Pancreas (tissue), 10 donors: ENCODE measurements at regions of chr22 and their contacts with region 1.

Region 1: DNA sequence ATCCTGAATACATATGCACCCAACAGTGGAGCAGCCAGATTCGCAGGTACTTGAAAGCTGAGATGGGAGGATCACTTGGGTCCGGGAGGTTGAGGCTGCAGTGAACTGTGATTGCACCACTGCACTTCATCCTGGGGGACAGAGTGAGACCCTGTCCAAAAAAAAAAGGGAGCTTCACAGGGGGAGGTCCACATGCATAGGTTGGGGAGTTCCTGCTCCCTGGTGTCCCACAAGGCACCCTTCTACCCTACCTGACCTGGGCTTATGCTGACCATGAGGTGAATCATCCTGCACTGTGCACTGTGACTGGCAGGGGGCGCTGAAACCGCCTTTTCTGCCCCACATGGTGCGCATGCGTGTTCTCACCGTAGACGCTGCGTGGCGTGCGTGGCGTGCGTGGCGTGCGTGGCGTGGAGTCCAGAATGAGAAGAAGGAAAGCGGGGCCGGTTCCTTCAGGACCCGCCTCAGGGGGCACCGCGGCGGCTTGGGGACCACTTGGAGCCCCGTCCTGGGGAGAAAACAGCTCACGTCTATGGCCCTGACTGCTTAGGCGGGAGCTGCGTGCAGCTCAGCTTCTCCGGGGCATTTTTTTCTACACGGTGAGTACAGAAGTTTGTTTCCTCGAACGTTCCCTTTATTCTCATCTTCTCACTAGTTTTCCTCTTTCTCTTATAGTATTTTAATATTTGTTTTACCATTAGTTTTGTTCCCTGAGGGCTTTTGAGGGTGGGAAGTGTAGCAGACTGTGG is 116.6 kb upstream of the GRK3 start:
- DNase-seq: peak; percentile 80 to 95 (median 92)
- ATAC-seq: peak; percentile 95 to 99 (median 99)
- H3K4me3 ChIP-seq: peak overlapping the region; percentile 47 to 66 (median 63)
- H3K27ac ChIP-seq: peak overlapping the region in 2 of 4 donors; percentile 59 to 74
- H3K4me1 ChIP-seq: peaks cover 5 to 21% (median 13%) of the 10 kb centered on the region in 3 donors
- H3K27me3 ChIP-seq: no peaks in the 10 kb centered on the region
- CTCF ChIP-seq: peak; percentile 81 to 93 (median 87)

Region 2: DNA sequence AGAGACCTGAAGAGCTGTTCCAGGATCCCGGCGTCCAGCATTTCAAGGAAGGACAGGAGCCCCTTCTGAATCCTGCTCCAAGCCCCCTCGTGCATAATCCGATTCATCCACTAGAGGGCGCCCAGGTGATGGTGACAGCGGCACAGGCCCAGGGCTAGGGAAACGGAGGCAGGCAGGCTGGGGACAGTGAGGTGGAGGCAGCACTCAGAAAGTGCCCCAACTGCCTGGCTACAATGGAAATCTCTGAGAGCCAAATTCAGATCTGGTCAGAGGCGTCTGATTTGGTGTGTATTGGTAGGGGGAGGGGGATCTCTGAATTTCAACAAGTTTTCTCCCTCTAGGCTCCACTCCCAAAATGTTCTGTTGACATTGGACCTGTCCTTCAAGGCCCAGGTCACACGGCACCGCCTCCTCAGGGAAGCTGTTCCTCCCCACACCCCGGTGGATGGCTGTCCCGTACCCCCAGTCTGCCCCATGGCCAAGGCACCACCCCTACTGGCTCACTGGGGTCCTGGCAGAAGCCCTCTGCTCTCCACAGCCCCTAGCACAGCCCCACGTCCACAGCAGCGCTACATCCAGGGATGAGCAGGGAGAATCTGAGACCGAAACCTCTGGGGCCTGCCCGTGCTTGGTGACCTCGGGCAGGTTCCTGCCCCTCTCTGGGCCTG is 85.5 kb before region 1 on chr22:
- intact Hi-C with region 1: loop called in 1 of 3 experiments (anchors 10 kb)
- DNase-seq: peak; percentile 37 to 88 (median 63)
- ATAC-seq: peak; percentile 53 to 82 (median 66)
- H3K4me3 ChIP-seq: no peak overlapping the region
- H3K27ac ChIP-seq: no peak overlapping the region
- H3K4me1 ChIP-seq: no peaks in the 10 kb centered on the region
- H3K27me3 ChIP-seq: no peaks in the 10 kb centered on the region
- CTCF ChIP-seq: peak; percentile 68 to 85 (median 76)

Region 3: GRCh38 chr22:25777870-25778269 is 330.0 kb after region 1 on chr22:
- intact Hi-C with region 1: loop called in 1 of 3 experiments (anchors 10 kb)
- DNase-seq: no peak
- ATAC-seq: peak in 2 of 4 donors; percentile 29 to 43
- H3K4me3 ChIP-seq: no peak overlapping the region
- H3K27ac ChIP-seq: no peak overlapping the region
- H3K4me1 ChIP-seq: no peaks in the 10 kb centered on the region
- H3K27me3 ChIP-seq: no peaks in the 10 kb centered on the region
- CTCF ChIP-seq: no peak